Endothelial cell of umbilical vein (primary cell): ENCODE measurements at regions of chr7 and their contacts with region 1.

Region 1: DNA sequence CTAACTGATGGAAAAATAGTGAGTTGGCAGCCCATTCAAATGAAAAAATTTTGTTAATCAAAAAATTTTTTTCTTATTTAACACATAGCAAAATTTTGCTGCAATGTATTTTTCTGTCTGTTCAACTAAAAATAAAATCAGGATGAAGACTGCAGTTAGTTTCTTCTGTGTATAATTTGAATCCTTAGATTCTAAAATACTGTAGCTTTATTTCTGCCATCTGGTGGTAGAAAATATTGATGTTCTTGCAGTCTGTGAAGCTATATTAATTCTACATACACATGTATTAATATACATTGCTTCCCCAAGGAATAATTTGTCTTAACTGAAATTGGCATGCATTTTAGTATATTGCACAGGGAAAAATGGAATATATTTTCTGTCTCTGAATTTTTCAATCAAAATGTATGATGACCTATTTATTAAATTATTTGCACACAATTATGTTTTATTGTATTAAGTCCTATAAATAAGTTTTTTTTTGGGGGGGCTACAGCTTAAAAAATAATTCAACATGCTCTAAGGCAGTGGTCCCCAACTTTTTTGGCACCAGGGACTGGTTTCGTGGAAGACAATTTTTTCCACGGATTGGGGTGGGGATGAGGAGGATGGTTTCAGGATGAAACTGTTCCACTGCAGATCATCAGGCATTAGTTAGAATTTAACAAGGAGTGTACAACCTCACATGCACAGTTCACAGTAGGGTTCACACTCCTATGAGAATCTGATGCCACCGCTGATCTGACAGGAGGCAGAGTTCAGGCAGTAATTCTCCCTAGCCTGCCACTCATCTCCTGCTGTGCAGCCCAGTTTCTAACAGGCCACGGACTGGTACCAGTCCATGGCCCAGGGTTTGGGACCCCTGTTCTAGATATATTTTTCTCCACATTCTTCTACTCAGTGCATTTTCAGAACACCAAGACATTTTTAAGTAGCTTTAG is 119.4 kb downstream of the GNAT3 start:
- DNase-seq: peak; percentile 57
- H3K4me3 ChIP-seq: no peak overlapping the region
- H3K27ac ChIP-seq: no peak overlapping the region
- H3K4me1 ChIP-seq: no peaks in the 10 kb centered on the region
- H3K27me3 ChIP-seq: no peaks in the 10 kb centered on the region
- CTCF ChIP-seq: peak; percentile 7 to 8
- POLR2A ChIP-seq: no peak

Region 2: GRCh38 chr7:80060218-80060806 is 332.2 kb before region 1 on chr7:
- CTCF ChIA-PET with region 1: interaction called, 116 read pairs
- POLR2A ChIA-PET with region 1: no interaction called
- dilution Hi-C with region 1: no loop called
- intact Hi-C with region 1: loop called (anchors 1 kb)
- DNase-seq: peak; percentile 81
- H3K4me3 ChIP-seq: no peak overlapping the region
- H3K27ac ChIP-seq: no peak overlapping the region
- H3K4me1 ChIP-seq: no peaks in the 10 kb centered on the region
- H3K27me3 ChIP-seq: no peaks in the 10 kb centered on the region
- CTCF ChIP-seq: peak; percentile 10 to 15
- POLR2A ChIP-seq: no peak

Region 3: DNA sequence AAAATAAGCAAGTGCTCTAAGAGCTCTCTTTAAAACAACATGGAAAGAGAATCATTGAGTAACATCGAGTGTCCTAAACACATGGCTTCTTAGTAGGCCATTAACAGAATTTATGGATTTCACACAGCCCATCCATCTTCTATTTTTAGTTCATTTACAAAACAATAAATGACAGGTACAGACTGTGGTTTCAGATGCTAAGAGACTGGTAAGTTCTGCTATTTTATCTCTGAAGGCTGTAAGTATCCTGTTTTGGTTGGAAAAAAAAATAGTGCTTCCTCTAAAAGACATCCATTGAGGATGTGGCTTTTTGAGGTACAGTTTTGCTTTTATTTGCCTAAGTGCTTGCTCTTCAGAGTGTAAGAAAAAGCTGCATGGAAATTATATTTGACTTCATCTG is 285.2 kb before region 1 on chr7:
- CTCF ChIA-PET with region 1: interaction called, 15 read pairs
- POLR2A ChIA-PET with region 1: no interaction called
- dilution Hi-C with region 1: no loop called
- intact Hi-C with region 1: no loop called
- DNase-seq: peak; percentile 59
- H3K4me3 ChIP-seq: peak overlapping the region in 1 of 3 experiments; percentile 40
- H3K27ac ChIP-seq: peak overlapping the region; percentile 58
- H3K4me1 ChIP-seq: peaks cover 28% of the 10 kb centered on the region
- H3K27me3 ChIP-seq: no peaks in the 10 kb centered on the region
- CTCF ChIP-seq: no peak
- POLR2A ChIP-seq: no peak

Region 4: GRCh38 chr7:80145780-80146422 is 246.6 kb before region 1 on chr7:
- CTCF ChIA-PET with region 1: interaction called, 12 read pairs
- POLR2A ChIA-PET with region 1: no interaction called
- dilution Hi-C with region 1: no loop called
- intact Hi-C with region 1: no loop called
- DNase-seq: peak; percentile 27
- H3K4me3 ChIP-seq: no peak overlapping the region
- H3K27ac ChIP-seq: no peak overlapping the region
- H3K4me1 ChIP-seq: no peaks in the 10 kb centered on the region
- H3K27me3 ChIP-seq: no peaks in the 10 kb centered on the region
- CTCF ChIP-seq: no peak
- POLR2A ChIP-seq: no peak

Region 5: GRCh38 chr7:80335511-80336231 is 56.8 kb before region 1 on chr7:
- CTCF ChIA-PET with region 1: interaction called, 10 read pairs
- POLR2A ChIA-PET with region 1: no interaction called
- dilution Hi-C with region 1: no loop called
- intact Hi-C with region 1: no loop called
- DNase-seq: peak; percentile 83
- H3K4me3 ChIP-seq: no peak overlapping the region
- H3K27ac ChIP-seq: no peak overlapping the region
- H3K4me1 ChIP-seq: peaks cover 10% of the 10 kb centered on the region
- H3K27me3 ChIP-seq: no peaks in the 10 kb centered on the region
- CTCF ChIP-seq: no peak
- POLR2A ChIP-seq: no peak

Region 6: GRCh38 chr7:80403686-80404241 is 11.3 kb after region 1 on chr7:
- CTCF ChIA-PET with region 1: interaction called, 14 read pairs
- POLR2A ChIA-PET with region 1: no interaction called
- dilution Hi-C with region 1: no loop called
- intact Hi-C with region 1: no loop called
- DNase-seq: no peak
- H3K4me3 ChIP-seq: no peak overlapping the region
- H3K27ac ChIP-seq: no peak overlapping the region
- H3K4me1 ChIP-seq: no peaks in the 10 kb centered on the region
- H3K27me3 ChIP-seq: no peaks in the 10 kb centered on the region
- CTCF ChIP-seq: no peak
- POLR2A ChIP-seq: no peak

Region 7: DNA sequence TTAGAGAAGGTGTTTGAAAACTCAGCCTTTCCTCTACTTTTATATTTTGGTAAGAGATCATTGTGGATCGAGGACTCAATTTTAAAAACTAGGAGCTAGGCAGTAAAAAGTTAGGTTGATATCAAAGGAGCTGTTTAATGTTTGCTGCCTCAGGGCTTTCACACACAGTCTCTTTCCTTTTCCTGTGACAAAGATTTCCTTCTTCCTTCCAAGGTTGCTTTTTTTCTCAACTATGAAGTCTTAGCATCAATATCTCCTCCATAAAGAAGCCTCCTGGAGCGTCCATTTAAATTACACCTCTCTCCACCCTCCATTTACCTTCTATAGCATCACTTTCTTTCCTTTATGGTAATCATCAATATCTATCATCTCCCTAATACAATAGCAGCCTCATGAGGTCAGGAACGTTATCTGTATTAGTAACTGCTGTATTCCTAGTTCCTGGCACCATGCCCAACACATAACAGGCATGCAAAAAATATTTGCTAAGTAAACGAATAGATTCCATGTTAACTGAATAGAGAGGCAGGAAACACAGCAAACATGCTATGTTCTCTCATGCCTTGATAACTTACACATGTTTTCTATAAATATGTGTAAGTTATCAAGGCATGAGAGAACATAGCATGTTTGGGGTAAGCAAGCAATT is 70.9 kb after region 1 on chr7:
- CTCF ChIA-PET with region 1: no interaction called
- POLR2A ChIA-PET with region 1: no interaction called
- dilution Hi-C with region 1: no loop called
- intact Hi-C with region 1: no loop called
- DNase-seq: peak; percentile 42
- H3K4me3 ChIP-seq: no peak overlapping the region
- H3K27ac ChIP-seq: no peak overlapping the region
- H3K4me1 ChIP-seq: no peaks in the 10 kb centered on the region
- H3K27me3 ChIP-seq: no peaks in the 10 kb centered on the region
- CTCF ChIP-seq: no peak
- POLR2A ChIP-seq: no peak

Region 8: GRCh38 chr7:81094952-81095351 is 702.5 kb after region 1 on chr7:
- CTCF ChIA-PET with region 1: no interaction called
- POLR2A ChIA-PET with region 1: no interaction called
- dilution Hi-C with region 1: no loop called
- intact Hi-C with region 1: no loop called
- DNase-seq: no peak
- H3K4me3 ChIP-seq: no peak overlapping the region
- H3K27ac ChIP-seq: no peak overlapping the region
- H3K4me1 ChIP-seq: no peaks in the 10 kb centered on the region
- H3K27me3 ChIP-seq: no peaks in the 10 kb centered on the region
- CTCF ChIP-seq: no peak
- POLR2A ChIP-seq: no peak